ENCODE measurements at regions of chr18 and their contacts with region 1.

Region 1: GRCh38 chr18:32349728-32350395 is 120.8 kb downstream of the GAREM1 start:
- DNase-seq: peak; percentile 30
- H3K4me3 ChIP-seq: peak overlapping the region; percentile 24
- H3K27ac ChIP-seq: peak overlapping the region; percentile 72
- H3K4me1 ChIP-seq: peaks cover 51% of the 10 kb centered on the region
- H3K27me3 ChIP-seq: no peaks in the 10 kb centered on the region
- CTCF ChIP-seq: no peak

Region 2: DNA sequence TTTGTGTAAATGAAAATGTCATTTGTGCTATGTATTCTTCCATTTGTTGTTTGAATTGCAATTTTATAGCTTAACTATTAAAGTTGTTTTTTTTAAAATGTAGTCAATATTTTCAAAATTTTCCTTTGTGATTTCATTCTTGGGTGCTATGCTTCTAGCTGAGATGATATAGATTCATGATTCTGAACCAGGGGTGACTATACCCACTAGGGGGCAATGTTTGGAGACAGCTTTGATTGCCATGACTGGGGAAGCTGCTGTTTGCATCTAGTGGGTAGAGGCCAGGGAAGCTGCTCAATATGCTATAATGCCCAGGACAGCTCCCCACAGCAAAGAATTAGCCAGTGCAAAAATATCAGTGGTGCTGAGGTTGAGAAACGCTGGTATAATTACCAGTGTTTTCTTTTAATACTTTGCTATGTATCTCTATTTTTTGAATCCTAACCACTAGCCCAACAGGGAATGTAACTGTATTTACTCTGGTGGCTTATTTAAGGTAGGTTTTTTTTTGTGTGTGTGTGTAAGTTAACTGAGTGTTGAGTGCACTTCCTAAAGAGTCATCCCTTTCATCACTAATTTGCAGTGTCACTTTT is 60.3 kb before region 1 on chr18:
- intact Hi-C with region 1: loop called (anchors 10 kb)
- DNase-seq: no peak
- H3K4me3 ChIP-seq: no peak overlapping the region
- H3K27ac ChIP-seq: no peak overlapping the region
- H3K4me1 ChIP-seq: no peaks in the 10 kb centered on the region
- H3K27me3 ChIP-seq: no peaks in the 10 kb centered on the region
- CTCF ChIP-seq: peak; percentile 76

Region 3: DNA sequence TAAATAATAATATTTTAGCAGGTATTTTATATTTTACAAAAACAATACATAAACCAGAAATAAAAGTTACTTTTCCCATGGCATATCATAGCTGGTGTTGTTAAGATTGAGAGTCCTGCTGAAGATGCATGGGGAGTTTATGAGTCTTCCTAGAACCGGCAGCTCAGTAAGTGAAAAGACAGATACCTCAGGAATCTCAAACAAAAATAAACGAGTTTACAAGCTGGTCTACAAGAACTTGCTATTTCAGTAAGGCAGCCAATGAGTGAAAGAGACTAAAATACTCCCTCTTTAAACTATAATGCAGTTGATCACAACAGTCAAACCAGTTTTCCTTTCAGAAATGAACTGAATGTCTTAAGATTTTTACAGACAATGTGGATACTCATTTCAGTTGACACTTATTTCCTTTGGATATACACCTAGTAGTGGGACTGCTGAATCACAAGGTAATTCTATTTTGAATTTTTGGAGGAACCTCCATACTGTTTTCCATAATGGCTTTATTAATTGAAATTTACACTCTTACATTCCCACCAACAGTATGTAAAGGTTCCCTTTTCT is 111.9 kb after region 1 on chr18:
- intact Hi-C with region 1: loop called (anchors 5 kb)
- DNase-seq: no peak
- H3K4me3 ChIP-seq: no peak overlapping the region
- H3K27ac ChIP-seq: peak overlapping the region; percentile 4
- H3K4me1 ChIP-seq: peaks cover 53% of the 10 kb centered on the region
- H3K27me3 ChIP-seq: no peaks in the 10 kb centered on the region
- CTCF ChIP-seq: peak; percentile 24

Measured in left ventricle myocardium inferior (tissue), 1 donor.